ENCODE measurements at regions of chr13 and their contacts with region 1.

Region 1: GRCh38 chr13:33441015-33441414 is 155.5 kb upstream of the STARD13 start:
- DNase-seq: peak; percentile 12
- H3K4me3 ChIP-seq: no peak overlapping the region
- H3K27ac ChIP-seq: no peak overlapping the region
- H3K4me1 ChIP-seq: no peaks in the 10 kb centered on the region
- H3K27me3 ChIP-seq: no peaks in the 10 kb centered on the region
- CTCF ChIP-seq: no peak
- POLR2A ChIP-seq: no peak

Region 2: DNA sequence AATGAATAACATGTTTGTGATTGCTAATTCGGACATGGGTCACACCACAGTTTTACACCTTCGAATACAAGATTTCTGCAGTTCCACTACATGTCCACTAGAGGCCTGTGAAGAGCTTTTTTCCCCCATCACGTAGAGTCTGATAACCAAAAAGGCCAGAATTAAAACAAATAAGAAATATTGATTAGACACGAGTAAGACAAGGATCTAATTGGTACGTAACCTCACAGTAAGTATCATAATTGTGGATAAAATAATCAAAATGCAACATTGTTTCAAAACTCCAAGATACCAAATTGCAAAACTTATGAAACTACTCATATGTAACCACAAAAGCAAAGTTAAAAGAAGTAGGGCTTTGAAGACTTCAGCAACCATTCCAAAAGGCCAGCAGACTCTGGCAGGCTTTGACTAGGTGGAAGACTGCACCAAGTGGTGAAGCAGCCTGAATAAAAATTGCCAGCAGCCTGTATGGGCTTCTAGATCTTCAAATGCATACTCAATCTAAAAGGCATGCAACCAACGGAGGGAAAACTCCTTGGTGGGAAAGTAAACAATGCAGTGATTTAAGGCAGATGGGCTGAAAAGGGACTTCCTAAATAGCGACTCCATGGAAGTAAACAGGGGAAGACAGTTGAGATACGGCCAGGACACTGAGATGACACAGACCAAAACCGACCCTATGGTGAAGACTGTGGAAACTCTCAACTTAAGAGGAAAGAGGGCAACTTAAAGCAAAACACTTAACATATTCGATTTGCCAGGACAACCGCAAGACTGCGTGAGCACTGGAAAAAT is 212.2 kb before region 1 on chr13:
- CTCF ChIA-PET with region 1: no interaction called
- POLR2A ChIA-PET with region 1: no interaction called
- dilution Hi-C with region 1: no loop called
- intact Hi-C with region 1: loop called (anchors 5 kb)
- DNase-seq: peak; percentile 71
- H3K4me3 ChIP-seq: no peak overlapping the region
- H3K27ac ChIP-seq: peak overlapping the region; percentile 46
- H3K4me1 ChIP-seq: peaks cover 31% of the 10 kb centered on the region
- H3K27me3 ChIP-seq: no peaks in the 10 kb centered on the region
- CTCF ChIP-seq: peak; percentile 65 to 70
- POLR2A ChIP-seq: no peak

Region 3: DNA sequence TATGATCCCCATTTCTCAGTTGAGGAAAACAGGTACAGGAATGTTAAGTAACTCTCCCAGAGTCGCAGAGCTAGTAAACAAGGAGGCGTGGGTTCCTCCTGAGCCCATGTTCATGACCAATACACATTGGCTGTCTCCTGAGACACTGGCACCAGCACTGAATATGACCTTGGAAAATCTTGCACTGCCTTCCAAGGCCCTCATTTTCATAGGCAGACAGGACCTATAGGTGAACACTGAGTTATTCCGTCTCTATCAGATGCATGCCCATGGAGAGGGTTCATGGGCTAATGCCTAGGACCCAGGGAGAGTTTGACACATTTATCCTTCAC is 881.7 kb after region 1 on chr13:
- CTCF ChIA-PET with region 1: no interaction called
- POLR2A ChIA-PET with region 1: no interaction called
- dilution Hi-C with region 1: no loop called
- intact Hi-C with region 1: no loop called
- DNase-seq: no peak
- H3K4me3 ChIP-seq: no peak overlapping the region
- H3K27ac ChIP-seq: no peak overlapping the region
- H3K4me1 ChIP-seq: no peaks in the 10 kb centered on the region
- H3K27me3 ChIP-seq: no peaks in the 10 kb centered on the region
- CTCF ChIP-seq: no peak
- POLR2A ChIP-seq: no peak

Measured in endothelial cell of umbilical vein (primary cell).